Activated naive CD4-positive, alpha-beta T cell treated with anti-CD3 and anti-CD28 coated beads for 36 hours (primary cell): ENCODE measurements at regions of chr9 and their contacts with region 1.

Region 1: GRCh38 chr9:86202338-86202882 is 57.0 kb downstream of the C9orf153 start:
- DNase-seq: peak; percentile 23
- H3K4me3 Mint-ChIP-seq: no peak overlapping the region
- H3K27ac Mint-ChIP-seq: no peak overlapping the region
- H3K4me1 Mint-ChIP-seq: no peaks in the 10 kb centered on the region
- H3K27me3 Mint-ChIP-seq: peaks cover 3% of the 10 kb centered on the region

Region 2: GRCh38 chr9:86163503-86163902 is 38.9 kb before region 1 on chr9:
- CTCF ChIA-PET with region 1: no interaction called
- intact Hi-C with region 1: no loop called
- DNase-seq: no peak
- H3K4me3 Mint-ChIP-seq: no peak overlapping the region
- H3K27ac Mint-ChIP-seq: no peak overlapping the region
- H3K4me1 Mint-ChIP-seq: no peaks in the 10 kb centered on the region
- H3K27me3 Mint-ChIP-seq: no peaks in the 10 kb centered on the region

Region 3: DNA sequence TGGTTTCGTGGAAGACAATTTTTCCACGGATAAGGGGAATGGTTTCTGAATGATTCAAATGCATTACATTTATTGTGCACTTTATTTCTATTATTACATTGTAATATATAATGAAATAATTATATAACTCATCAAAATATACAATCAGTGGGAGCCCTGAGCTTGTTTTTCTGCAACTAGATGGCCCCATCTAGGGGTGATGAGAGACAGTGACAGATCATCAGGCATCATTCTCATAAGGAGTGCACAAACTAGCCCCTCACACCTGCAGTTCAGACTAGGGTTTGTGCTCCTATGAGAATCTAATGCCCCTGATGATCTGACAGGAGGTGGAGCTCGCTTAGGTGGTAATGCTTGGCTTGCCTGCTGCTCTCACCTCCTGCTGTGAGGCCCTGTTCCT is 73.6 kb after region 1 on chr9:
- CTCF ChIA-PET with region 1: interaction called, 3 read pairs
- intact Hi-C with region 1: loop called (anchors 5 kb)
- DNase-seq: no peak
- H3K4me3 Mint-ChIP-seq: no peak overlapping the region
- H3K27ac Mint-ChIP-seq: no peak overlapping the region
- H3K4me1 Mint-ChIP-seq: peaks cover 34% of the 10 kb centered on the region
- H3K27me3 Mint-ChIP-seq: no peaks in the 10 kb centered on the region

Region 4: GRCh38 chr9:86413966-86414880 is 211.8 kb after region 1 on chr9:
- CTCF ChIA-PET with region 1: no interaction called
- intact Hi-C with region 1: loop called (anchors 5 kb)
- DNase-seq: no peak
- H3K4me3 Mint-ChIP-seq: no peak overlapping the region
- H3K27ac Mint-ChIP-seq: no peak overlapping the region
- H3K4me1 Mint-ChIP-seq: no peaks in the 10 kb centered on the region
- H3K27me3 Mint-ChIP-seq: peaks cover 4% of the 10 kb centered on the region

Region 5: GRCh38 chr9:86575825-86576525 is 373.6 kb after region 1 on chr9:
- CTCF ChIA-PET with region 1: no interaction called
- intact Hi-C with region 1: no loop called
- DNase-seq: no peak
- H3K4me3 Mint-ChIP-seq: no peak overlapping the region
- H3K27ac Mint-ChIP-seq: no peak overlapping the region
- H3K4me1 Mint-ChIP-seq: no peaks in the 10 kb centered on the region
- H3K27me3 Mint-ChIP-seq: peaks cover 12% of the 10 kb centered on the region